ENCODE measurements at regions of chr16 and their contacts with region 1.

Region 1: GRCh38 chr16:28553776-28554633 is at the start of gene SGF29:
- DNase-seq: peak; percentile 82
- ATAC-seq: peak; percentile 90
- H3K4me3 ChIP-seq: peak within 1 kb of the TSS; percentile 70 to 94 (median 83)
- H3K27ac ChIP-seq: peak within 1 kb of the TSS; percentile 99
- H3K4me1 ChIP-seq: peaks cover 40% of the 10 kb centered on the region
- H3K27me3 ChIP-seq: no peaks in the 10 kb centered on the region
- CTCF ChIP-seq: peak; percentile 86
- EP300 ChIP-seq: peak in 1 of 2 experiments; percentile 23; a peak in 1 of 4 replicates
- POLR2A ChIP-seq: peak; percentile 97 to 98
- RAD21 ChIP-seq: peak; percentile 81
- total RNA-seq, gene SGF29: 21.2 and 29.4 TPM in 2 replicates

Region 2: GRCh38 chr16:28277537-28278388 is 276.2 kb before region 1 on chr16:
- CTCF ChIA-PET with region 1: no interaction called
- POLR2A ChIA-PET with region 1: no interaction called
- in situ Hi-C with region 1: no loop called
- intact Hi-C with region 1: loop called (anchors 2 kb)
- DNase-seq: peak; percentile 73
- ATAC-seq: peak; percentile 92
- H3K4me3 ChIP-seq: peak overlapping the region; percentile 34 to 74 (median 38)
- H3K27ac ChIP-seq: no peak overlapping the region
- H3K4me1 ChIP-seq: peaks cover 10% of the 10 kb centered on the region; the same call in 1 of the 2 replicates
- H3K27me3 ChIP-seq: peaks cover 3 to 42% of the 10 kb centered on the region in 2 experiments; a peak in 4 of 5 replicates
- CTCF ChIP-seq: peak; percentile 99
- EP300 ChIP-seq: no peak
- POLR2A ChIP-seq: no peak
- RAD21 ChIP-seq: peak; percentile 99

Region 3: DNA sequence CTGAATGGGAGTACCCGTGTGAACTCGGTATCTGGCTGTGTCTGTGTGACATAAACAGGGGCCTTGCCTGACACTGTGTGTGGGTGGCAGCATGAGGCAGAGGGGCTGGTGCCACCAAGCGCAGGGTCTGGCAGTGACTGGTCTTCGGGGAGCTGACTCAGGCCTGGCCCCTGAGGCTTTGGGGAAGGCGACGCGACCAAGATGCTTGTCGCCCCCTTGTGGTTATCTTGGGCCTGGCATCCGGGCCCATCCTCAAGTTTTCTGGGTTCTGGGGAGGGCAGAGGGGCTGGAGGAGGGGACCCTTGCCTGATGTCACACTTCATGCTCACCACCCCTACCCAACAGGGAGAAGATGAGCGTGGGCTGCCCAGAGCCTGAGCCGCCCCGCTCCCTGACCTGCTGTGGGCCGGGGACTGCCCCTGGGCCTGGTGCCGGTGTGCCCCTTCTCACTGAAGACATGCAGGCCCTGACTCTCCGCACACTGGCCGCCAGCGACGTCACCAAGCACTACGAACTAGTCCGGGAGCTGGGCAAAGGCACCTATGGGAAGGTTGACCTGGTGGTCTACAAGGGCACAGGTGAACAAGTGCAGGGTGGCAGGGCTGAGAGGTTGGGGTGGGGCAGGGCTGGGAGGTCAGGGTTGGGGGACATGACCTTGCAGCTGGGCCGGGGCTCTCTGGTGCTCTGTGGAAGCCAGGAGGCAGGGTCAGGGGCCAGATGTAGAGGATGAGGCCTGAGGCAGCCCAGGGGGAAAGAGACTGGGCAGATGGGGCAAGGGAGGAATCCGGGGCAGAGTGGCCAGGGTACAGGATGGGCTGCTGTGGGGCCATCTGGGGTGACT is 236.7 kb before region 1 on chr16:
- CTCF ChIA-PET with region 1: no interaction called
- POLR2A ChIA-PET with region 1: no interaction called
- in situ Hi-C with region 1: no loop called
- intact Hi-C with region 1: loop called (anchors 1 kb)
- DNase-seq: peak; percentile 42
- ATAC-seq: peak; percentile 55
- H3K4me3 ChIP-seq: no peak overlapping the region
- H3K27ac ChIP-seq: no peak overlapping the region
- H3K4me1 ChIP-seq: no peaks in the 10 kb centered on the region
- H3K27me3 ChIP-seq: peaks cover 2 to 15% of the 10 kb centered on the region in 2 experiments; a peak in 2 of 5 replicates
- CTCF ChIP-seq: peak; percentile 95
- EP300 ChIP-seq: no peak
- POLR2A ChIP-seq: no peak
- RAD21 ChIP-seq: peak; percentile 80

Region 4: DNA sequence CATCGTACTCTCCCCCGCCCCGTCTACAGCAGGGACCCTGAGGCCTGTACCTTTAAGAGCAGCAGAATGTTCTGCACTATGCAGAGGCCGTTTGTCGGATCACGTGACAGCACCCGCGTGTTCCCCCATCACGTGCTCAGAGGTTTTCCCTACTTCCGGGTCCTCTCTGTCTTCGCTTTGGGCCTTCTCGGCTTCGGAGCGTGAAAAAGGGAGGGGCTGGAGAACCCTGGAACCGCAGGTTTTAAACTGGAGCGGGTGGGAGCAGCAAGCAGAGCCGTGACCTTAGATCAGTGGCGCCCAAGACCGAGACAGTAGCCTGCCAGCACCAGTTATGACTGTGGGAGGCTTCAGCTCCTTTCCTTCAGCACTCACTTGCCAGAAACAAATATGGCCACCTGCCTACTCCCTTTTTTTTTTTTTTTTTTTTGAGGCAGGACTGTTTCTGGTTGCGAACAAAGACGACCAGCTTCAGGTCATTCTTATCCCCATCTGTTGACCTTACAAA is 62.0 kb before region 1 on chr16 and contains the start of gene CLN3:
- CTCF ChIA-PET with region 1: interaction called, 12 read pairs
- POLR2A ChIA-PET with region 1: interaction called, 4 read pairs
- in situ Hi-C with region 1: no loop called
- intact Hi-C with region 1: no loop called
- DNase-seq: peak; percentile 96
- ATAC-seq: peak; percentile 93
- H3K4me3 ChIP-seq: peak within 1 kb of the TSS; percentile 89 to 98 (median 92)
- H3K27ac ChIP-seq: peak within 1 kb of the TSS; percentile 99
- H3K4me1 ChIP-seq: peaks cover 20% of the 10 kb centered on the region; the same call in 1 of the 2 replicates
- H3K27me3 ChIP-seq: peaks cover 11 to 31% of the 10 kb centered on the region in 2 experiments; a peak in 4 of 5 replicates
- CTCF ChIP-seq: no peak; the same call in 1 of the 2 replicates
- EP300 ChIP-seq: peak in 1 of 2 experiments; percentile 29; a peak in 1 of 4 replicates
- POLR2A ChIP-seq: peak; percentile 54 to 66; a peak in 3 of 4 replicates
- RAD21 ChIP-seq: no peak
- total RNA-seq, gene CLN3: 19.9 and 23.4 TPM in 2 replicates

Region 5: DNA sequence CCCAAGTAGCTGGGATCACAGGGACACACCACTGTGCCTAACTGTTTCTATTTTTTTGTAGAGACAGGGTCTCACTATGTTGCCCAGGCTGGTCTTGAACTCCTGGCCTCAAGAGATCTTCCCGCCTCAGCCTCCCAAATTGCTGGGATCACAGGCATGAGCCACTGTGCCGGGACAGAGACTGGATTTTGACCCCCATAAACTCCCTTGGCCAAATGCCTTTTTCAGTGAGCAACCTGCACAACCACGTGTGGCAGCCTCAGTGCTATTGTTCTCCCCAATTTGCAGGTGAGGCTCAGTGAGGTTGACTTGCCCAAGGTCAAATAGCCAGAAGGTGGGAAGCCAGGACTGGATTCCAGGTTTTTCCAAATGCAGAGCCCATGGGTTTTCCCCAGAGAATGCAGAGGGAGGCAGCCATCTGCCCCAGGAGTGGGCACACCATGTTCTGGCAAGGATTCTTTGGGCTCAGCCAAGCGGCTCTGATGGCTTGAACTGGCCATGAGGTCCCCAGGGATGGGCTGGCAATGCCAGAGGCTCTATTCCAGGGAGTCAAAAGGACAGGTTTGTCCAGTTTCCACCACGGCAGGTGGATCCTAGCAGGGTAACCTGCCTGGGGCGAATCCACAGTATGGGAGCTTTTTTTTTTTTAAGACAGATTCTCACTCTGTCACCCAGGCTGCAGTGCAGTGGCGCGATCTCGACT is 49.1 kb before region 1 on chr16:
- CTCF ChIA-PET with region 1: no interaction called
- POLR2A ChIA-PET with region 1: no interaction called
- in situ Hi-C with region 1: no loop called
- intact Hi-C with region 1: no loop called
- DNase-seq: no peak
- ATAC-seq: no peak
- H3K4me3 ChIP-seq: peak overlapping the region in 1 of 3 experiments; percentile 34; a peak in 2 of 6 replicates
- H3K27ac ChIP-seq: no peak overlapping the region
- H3K4me1 ChIP-seq: peaks cover 55% of the 10 kb centered on the region
- H3K27me3 ChIP-seq: peaks cover 2 to 14% of the 10 kb centered on the region in 2 experiments; a peak in 4 of 5 replicates
- CTCF ChIP-seq: no peak
- EP300 ChIP-seq: no peak
- POLR2A ChIP-seq: no peak
- RAD21 ChIP-seq: no peak

Region 6: GRCh38 chr16:28538733-28539596 is 15.0 kb before region 1 on chr16 and contains the start of gene NUPR1:
- CTCF ChIA-PET with region 1: no interaction called
- POLR2A ChIA-PET with region 1: interaction called, 19 read pairs
- in situ Hi-C with region 1: no loop called
- intact Hi-C with region 1: no loop called
- DNase-seq: peak; percentile 89
- ATAC-seq: peak; percentile 71
- H3K4me3 ChIP-seq: peak within 1 kb of the TSS; percentile 60 to 76 (median 62)
- H3K27ac ChIP-seq: peak within 1 kb of the TSS; percentile 78
- H3K4me1 ChIP-seq: peaks cover 75% of the 10 kb centered on the region
- H3K27me3 ChIP-seq: no peaks in the 10 kb centered on the region
- CTCF ChIP-seq: no peak
- EP300 ChIP-seq: 0 out of 4 replicates have a peak, but pooled peaks of 1 of the 2 experiments have one; percentile 46
- POLR2A ChIP-seq: peak; percentile 56 to 62
- RAD21 ChIP-seq: no peak
- total RNA-seq, gene NUPR1: 18.0 and 23.9 TPM in 2 replicates

Region 7: GRCh38 chr16:28597692-28598261 is 43.8 kb after region 1 on chr16:
- CTCF ChIA-PET with region 1: no interaction called
- POLR2A ChIA-PET with region 1: interaction called, 22 read pairs
- in situ Hi-C with region 1: no loop called
- intact Hi-C with region 1: no loop called
- DNase-seq: peak; percentile 91
- ATAC-seq: peak; percentile 61
- H3K4me3 ChIP-seq: peak overlapping the region; percentile 66 to 80 (median 69)
- H3K27ac ChIP-seq: peak overlapping the region; percentile 81
- H3K4me1 ChIP-seq: peaks cover 55% of the 10 kb centered on the region
- H3K27me3 ChIP-seq: no peaks in the 10 kb centered on the region
- CTCF ChIP-seq: peak; percentile 77
- EP300 ChIP-seq: 0 out of 4 replicates have a peak, but pooled peaks of 1 of the 2 experiments have one; percentile 17
- POLR2A ChIP-seq: peak; percentile 40 to 67; a peak in 2 of 4 replicates
- RAD21 ChIP-seq: peak; percentile 52

Region 8: GRCh38 chr16:28609631-28610594 is 55.9 kb after region 1 on chr16 and contains the start of gene SULT1A1:
- CTCF ChIA-PET with region 1: no interaction called
- POLR2A ChIA-PET with region 1: interaction called, 12 read pairs
- in situ Hi-C with region 1: no loop called
- intact Hi-C with region 1: loop called (anchors 10 kb)
- DNase-seq: peak; percentile 93
- ATAC-seq: peak; percentile 71
- H3K4me3 ChIP-seq: peak within 1 kb of the TSS; percentile 66 to 90 (median 70)
- H3K27ac ChIP-seq: peak within 1 kb of the TSS; percentile 75
- H3K4me1 ChIP-seq: peaks cover 39% of the 10 kb centered on the region
- H3K27me3 ChIP-seq: no peaks in the 10 kb centered on the region
- CTCF ChIP-seq: no peak
- EP300 ChIP-seq: no peak; a peak in 1 of 4 replicates
- POLR2A ChIP-seq: peak; percentile 74 to 99
- RAD21 ChIP-seq: peak; percentile 21; the same call in 1 of the 2 replicates
- total RNA-seq, gene SULT1A1: 147 and 174 TPM in 2 replicates

Measured in HepG2 (cell line).